Left ventricle myocardium inferior (tissue), 1 donor: ENCODE measurements at regions of chr17 and their contacts with region 1.

Region 1: DNA sequence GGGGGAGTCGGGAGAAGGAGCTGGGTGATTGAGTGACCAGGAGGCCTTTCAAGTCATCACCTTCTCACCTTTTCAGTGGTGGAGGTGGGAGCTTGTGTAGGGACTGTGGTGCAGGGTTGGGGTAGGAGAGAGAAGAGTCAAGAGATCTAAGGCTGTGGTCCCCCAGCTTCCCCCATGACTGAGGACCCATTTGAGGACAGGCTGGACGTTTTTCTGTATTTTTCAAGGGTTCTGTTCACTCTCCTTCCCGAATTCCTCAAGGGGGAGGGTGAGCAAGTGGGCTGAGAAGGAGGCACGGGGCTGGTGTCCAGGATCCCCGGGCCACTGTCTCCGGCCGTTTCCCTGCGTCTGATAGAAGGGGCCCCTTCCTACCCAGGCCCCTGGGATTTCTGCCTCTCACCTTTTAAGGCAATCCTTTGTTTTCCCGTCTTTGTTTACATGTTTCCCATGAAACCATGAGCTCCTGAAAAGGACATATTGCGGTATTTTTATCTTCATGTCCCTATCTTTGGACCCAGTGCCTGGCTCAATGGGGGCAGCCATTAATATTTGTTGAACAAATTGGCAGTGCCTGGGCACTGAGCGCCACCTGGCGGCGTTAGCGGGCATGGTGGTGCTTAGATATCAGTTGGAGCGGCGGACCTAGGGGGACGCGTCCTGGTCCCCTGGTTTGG is 9.2 kb upstream of the CD300A start:
- DNase-seq: peak; percentile 83
- H3K4me3 ChIP-seq: no peak overlapping the region
- H3K27ac ChIP-seq: peak overlapping the region; percentile 4
- H3K4me1 ChIP-seq: peaks cover 45% of the 10 kb centered on the region
- H3K27me3 ChIP-seq: peaks cover 29% of the 10 kb centered on the region
- CTCF ChIP-seq: peak; percentile 95

Region 2: DNA sequence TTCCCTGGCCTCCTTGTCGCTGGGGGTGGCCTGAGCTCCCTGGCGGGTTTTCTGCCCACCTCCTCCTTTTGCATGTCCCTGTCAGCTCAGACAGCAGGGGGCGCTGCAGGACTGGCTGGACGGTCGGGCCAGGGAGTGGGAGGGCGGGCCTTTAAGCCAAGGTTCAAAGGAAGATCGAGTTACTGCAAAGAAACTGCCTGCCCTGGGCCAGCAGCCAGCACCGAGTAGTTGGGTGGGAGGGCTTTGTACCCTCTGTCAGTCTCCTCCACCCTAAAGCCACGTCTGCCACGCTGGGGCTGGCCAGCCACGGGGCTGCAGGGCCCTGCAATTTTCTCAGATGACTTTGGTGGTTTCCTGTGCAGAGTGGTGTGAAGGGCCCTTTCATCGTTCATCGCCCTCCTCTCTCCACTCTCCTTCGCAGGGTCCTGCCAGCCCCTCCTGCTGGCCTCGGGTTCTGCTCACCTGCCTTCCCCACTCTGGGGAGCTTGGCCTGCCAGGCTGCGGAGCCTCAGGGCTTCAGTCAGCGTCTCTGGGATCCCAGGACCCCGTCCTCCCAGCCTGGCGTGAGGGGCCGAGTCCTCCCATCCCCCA is 77.7 kb before region 1 on chr17:
- intact Hi-C with region 1: loop called (anchors 2 kb)
- DNase-seq: peak; percentile 91
- H3K4me3 ChIP-seq: peak overlapping the region; percentile 32
- H3K27ac ChIP-seq: peak overlapping the region; percentile 8
- H3K4me1 ChIP-seq: peaks cover 21% of the 10 kb centered on the region
- H3K27me3 ChIP-seq: no peaks in the 10 kb centered on the region
- CTCF ChIP-seq: peak; percentile 98

Region 3: DNA sequence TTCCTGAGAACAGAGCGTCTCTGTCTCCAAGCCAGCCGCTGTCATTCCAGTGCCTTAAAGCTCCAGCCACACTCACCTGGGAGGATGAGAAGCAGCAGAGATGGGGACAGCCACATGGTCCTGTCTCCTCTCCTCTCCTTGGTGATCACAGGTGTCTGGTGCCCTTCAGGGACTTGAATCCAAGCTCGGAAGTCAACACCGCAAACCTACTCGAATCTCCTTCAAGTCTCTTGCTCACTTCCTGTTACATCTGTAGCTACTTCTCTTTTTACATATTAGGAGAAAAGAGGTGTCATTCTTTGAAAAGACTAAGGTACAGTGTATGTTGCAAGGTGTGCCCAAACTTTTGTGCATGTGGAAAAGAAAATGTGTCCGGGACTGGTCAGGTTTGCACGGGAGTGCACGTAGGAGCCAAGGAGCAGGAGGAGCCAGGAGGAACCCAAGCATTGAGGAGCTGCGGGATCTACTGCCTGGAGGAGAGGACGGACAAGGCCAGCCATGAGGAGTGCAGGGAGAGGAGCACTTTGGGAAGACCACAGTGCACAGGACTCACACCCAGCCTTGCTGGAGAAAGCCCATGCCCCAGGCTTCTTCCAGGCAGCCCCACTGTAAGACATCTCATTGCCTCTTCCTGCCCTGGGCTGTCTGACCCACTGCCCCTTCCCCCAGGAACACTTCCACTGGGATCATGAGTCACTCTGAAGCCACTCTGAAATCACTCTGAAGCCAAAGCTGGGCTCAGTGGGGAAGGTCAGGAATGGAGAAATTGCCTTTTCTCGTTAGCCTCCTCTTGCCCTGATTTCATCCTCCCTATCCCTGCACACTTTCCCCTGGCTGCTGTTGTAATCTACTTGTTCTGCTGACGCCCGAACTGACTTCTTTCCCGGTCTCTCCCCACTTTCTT is 135.1 kb after region 1 on chr17 and contains the start of gene CD300LD:
- intact Hi-C with region 1: no loop called
- DNase-seq: no peak
- H3K4me3 ChIP-seq: no peak within 1 kb of the TSS
- H3K27ac ChIP-seq: no peak within 1 kb of the TSS
- H3K4me1 ChIP-seq: no peaks in the 10 kb centered on the region
- H3K27me3 ChIP-seq: peaks cover 81% of the 10 kb centered on the region
- CTCF ChIP-seq: no peak
- total RNA-seq, gene CD300LD: not detected